ENCODE measurements at regions of chr9 and their contacts with region 1.

Region 1: GRCh38 chr9:72280913-72281500 is 84.0 kb downstream of the ZFAND5 start:
- DNase-seq: peak; percentile 79
- H3K4me3 Mint-ChIP-seq: no peak overlapping the region
- H3K27ac Mint-ChIP-seq: no peak overlapping the region
- H3K4me1 Mint-ChIP-seq: no peaks in the 10 kb centered on the region
- H3K27me3 Mint-ChIP-seq: no peaks in the 10 kb centered on the region

Region 2: GRCh38 chr9:72169178-72169577 is 111.8 kb before region 1 on chr9:
- CTCF ChIA-PET with region 1: no interaction called
- intact Hi-C with region 1: no loop called
- DNase-seq: no peak
- H3K4me3 Mint-ChIP-seq: no peak overlapping the region
- H3K27ac Mint-ChIP-seq: no peak overlapping the region
- H3K4me1 Mint-ChIP-seq: no peaks in the 10 kb centered on the region
- H3K27me3 Mint-ChIP-seq: peaks cover 2% of the 10 kb centered on the region

Region 3: DNA sequence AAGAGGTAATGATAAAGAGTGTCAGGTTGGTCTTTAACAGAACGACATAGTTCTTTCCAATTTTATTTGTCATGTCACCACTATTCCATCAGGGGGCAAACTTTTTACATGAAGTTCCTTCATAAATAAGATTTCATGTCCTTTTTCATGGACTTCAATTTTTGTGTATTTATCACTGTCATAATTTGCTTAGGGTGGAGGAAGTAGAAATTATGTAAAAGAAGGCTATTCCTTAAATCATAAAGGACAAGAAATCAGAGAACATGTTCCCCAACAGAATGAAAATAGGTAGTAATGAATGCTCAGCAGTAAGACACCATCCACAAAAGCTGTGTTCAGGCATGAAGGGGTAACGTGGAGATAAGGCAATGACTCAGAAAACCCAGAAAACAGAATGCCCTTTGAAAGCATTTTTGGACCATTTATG is 11.3 kb after region 1 on chr9:
- CTCF ChIA-PET with region 1: interaction called, 16 read pairs
- intact Hi-C with region 1: no loop called
- DNase-seq: no peak
- H3K4me3 Mint-ChIP-seq: no peak overlapping the region
- H3K27ac Mint-ChIP-seq: no peak overlapping the region
- H3K4me1 Mint-ChIP-seq: peaks cover 2% of the 10 kb centered on the region
- H3K27me3 Mint-ChIP-seq: no peaks in the 10 kb centered on the region

Region 4: GRCh38 chr9:72592502-72593403 is 311.7 kb after region 1 on chr9:
- CTCF ChIA-PET with region 1: interaction called, 64 read pairs
- intact Hi-C with region 1: loop called (anchors 1 kb)
- DNase-seq: peak; percentile 41
- H3K4me3 Mint-ChIP-seq: no peak overlapping the region
- H3K27ac Mint-ChIP-seq: no peak overlapping the region
- H3K4me1 Mint-ChIP-seq: peaks cover 6% of the 10 kb centered on the region
- H3K27me3 Mint-ChIP-seq: no peaks in the 10 kb centered on the region

Region 5: DNA sequence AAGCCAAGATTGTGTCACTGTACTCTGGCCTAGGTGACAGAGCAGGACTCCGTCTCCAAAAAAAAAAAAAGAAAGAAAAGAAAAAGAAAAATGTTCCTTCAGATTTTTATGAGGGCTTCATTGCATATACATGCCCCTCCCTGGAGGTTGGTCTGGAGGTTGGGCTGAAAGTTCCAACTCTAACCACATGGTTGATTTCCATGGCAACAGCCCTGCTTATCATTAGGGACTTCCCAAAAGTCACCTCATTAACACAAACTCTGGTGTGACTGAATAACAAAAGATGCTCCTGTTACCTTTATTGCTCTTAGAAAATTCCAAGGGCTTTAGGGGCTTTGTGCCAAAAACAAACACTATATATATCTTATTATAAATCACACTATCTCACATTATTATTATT is 354.2 kb after region 1 on chr9:
- CTCF ChIA-PET with region 1: no interaction called
- intact Hi-C with region 1: no loop called
- DNase-seq: peak; percentile 14
- H3K4me3 Mint-ChIP-seq: no peak overlapping the region
- H3K27ac Mint-ChIP-seq: no peak overlapping the region
- H3K4me1 Mint-ChIP-seq: no peaks in the 10 kb centered on the region
- H3K27me3 Mint-ChIP-seq: no peaks in the 10 kb centered on the region

Region 6: GRCh38 chr9:72827950-72828731 is 547.1 kb after region 1 on chr9:
- CTCF ChIA-PET with region 1: interaction called, 12 read pairs
- intact Hi-C with region 1: no loop called
- DNase-seq: no peak
- H3K4me3 Mint-ChIP-seq: no peak overlapping the region
- H3K27ac Mint-ChIP-seq: no peak overlapping the region
- H3K4me1 Mint-ChIP-seq: no peaks in the 10 kb centered on the region
- H3K27me3 Mint-ChIP-seq: no peaks in the 10 kb centered on the region

Region 7: DNA sequence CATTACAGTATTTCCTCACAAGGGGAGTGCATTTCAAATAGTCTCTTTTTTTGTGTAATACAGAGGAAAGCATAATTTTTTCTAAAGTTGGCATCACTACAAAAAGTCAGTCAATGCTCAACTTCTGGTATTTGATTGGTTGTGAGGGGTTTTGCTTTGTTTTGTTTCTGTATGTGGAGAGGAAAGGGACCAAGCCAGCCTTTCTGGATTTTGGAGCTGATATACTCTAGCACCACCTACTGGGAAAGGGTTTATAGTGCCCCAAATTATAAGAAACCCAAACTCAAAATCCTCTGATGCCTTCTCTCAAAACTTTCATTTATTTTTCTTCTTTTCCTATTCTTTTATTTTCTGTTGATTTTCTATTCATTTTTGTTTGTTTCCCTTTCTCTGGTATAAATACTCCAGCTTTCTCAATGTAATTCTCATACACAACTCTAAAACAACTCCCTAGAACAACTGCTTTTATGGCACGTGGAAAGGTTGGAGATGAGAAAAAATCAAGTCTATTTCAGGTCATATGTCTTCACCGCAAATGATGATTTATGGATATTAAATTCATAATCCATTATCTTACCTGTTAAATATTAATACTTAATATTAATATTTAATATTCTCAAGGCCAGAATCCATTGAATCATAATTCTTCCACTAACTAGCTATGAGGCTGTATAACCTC is 801.1 kb after region 1 on chr9:
- CTCF ChIA-PET with region 1: no interaction called
- intact Hi-C with region 1: loop called (anchors 10 kb)
- DNase-seq: no peak
- H3K4me3 Mint-ChIP-seq: no peak overlapping the region
- H3K27ac Mint-ChIP-seq: no peak overlapping the region
- H3K4me1 Mint-ChIP-seq: no peaks in the 10 kb centered on the region
- H3K27me3 Mint-ChIP-seq: peaks cover 6% of the 10 kb centered on the region

Measured in activated naive CD4-positive, alpha-beta T cell treated with anti-CD3 and anti-CD28 coated beads for 36 hours (primary cell).